ENCODE measurements at regions of chr17 and their contacts with region 1.

Region 1: DNA sequence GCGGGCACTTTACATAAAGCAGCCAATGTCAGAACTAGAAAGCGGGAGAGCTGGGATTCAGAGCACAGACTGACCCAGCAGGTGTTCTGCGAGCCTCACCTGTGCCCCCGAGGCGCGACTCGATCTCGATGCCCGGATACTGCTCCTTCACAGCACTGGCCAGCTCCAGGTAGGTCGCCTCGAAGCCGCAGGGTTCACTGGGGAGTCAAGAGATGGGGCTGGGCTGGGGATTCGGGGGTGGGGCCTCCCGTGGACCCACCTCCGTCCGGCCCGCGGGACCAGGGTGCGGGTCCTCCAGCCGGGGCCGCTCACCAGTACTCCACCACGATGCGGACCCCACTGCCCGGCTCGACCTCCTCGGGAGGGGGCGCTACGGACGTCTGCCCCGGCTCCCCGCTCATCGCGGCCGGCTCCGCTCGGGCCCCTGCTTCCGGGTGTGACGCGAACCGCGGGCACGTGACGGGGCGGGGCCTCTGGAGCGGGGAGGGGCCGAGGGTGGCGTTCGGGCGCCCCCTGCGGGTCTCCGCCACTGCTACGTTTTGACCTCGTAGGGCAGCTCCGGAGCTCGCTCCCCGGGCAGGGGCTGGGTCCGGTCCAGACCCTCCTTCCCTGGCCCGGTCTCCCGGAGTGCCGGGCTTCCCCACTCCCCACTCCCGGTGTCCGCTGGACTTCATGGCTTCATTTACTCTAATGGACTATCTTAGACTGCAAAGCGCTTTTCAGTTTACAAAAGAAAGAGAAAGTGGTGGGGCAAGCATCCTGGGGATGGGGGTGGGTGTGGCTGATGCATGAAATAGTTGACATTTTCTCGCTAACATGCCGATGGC is at the start of gene MIEN1:
- DNase-seq: peak; percentile 99
- H3K4me3 ChIP-seq: peak within 1 kb of the TSS; percentile 65 to 96
- H3K27ac ChIP-seq: peak within 1 kb of the TSS; percentile 65 to 76; a peak in 3 of 4 replicates
- H3K4me1 ChIP-seq: peaks cover 0 to 8% of the 10 kb centered on the region in 2 experiments; a peak in 1 of 4 replicates
- H3K27me3 ChIP-seq: no peaks in the 10 kb centered on the region
- CTCF ChIP-seq: peak; percentile 76
- EP300 ChIP-seq: no peak
- RAD21 ChIP-seq: peak; percentile 43
- polyA plus RNA-seq, gene MIEN1: 100 and 105 TPM in 2 replicates

Region 2: GRCh38 chr17:39538866-39539265 is 191.4 kb before region 1 on chr17:
- CTCF ChIA-PET with region 1: no interaction called
- POLR2A ChIA-PET with region 1: no interaction called
- DNase-seq: no peak
- H3K4me3 ChIP-seq: no peak overlapping the region
- H3K27ac ChIP-seq: no peak overlapping the region
- H3K4me1 ChIP-seq: no peaks in the 10 kb centered on the region
- H3K27me3 ChIP-seq: no peaks in the 10 kb centered on the region
- CTCF ChIP-seq: no peak
- EP300 ChIP-seq: no peak
- RAD21 ChIP-seq: no peak

Region 3: GRCh38 chr17:39668199-39668966 is 61.9 kb before region 1 on chr17 and contains the start of gene PNMT:
- CTCF ChIA-PET with region 1: interaction called, 10 read pairs
- POLR2A ChIA-PET with region 1: no interaction called
- DNase-seq: peak; percentile 93
- H3K4me3 ChIP-seq: peak within 1 kb of the TSS; percentile 36 to 49
- H3K27ac ChIP-seq: no peak within 1 kb of the TSS
- H3K4me1 ChIP-seq: peaks cover 0 to 12% of the 10 kb centered on the region in 2 experiments; a peak in 1 of 4 replicates
- H3K27me3 ChIP-seq: no peaks in the 10 kb centered on the region
- CTCF ChIP-seq: peak; percentile 61
- EP300 ChIP-seq: no peak
- RAD21 ChIP-seq: peak; percentile 28; the same call in 1 of the 2 replicates
- polyA plus RNA-seq, gene PNMT: 0.05 and 0.07 TPM in 2 replicates

Region 4: DNA sequence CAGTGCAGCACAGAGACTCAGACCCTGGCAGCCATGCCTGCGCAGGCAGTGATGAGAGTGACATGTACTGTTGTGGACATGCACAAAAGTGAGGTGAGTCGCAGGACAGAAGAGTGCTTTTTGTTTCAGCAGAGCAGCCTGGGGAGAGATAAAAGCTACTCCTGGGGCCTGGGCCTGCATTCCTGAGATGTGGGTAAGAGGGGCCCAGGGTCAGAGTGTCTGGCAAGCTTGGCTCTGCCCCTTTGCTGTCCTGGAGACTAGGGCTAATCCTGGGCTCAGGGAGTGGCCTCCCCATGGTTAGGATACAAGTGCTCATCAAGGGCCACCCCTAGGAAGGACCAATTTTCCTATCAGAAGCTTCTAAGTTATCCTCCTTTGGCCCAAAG is 35.2 kb before region 1 on chr17:
- CTCF ChIA-PET with region 1: interaction called, 15 read pairs
- POLR2A ChIA-PET with region 1: no interaction called
- DNase-seq: no peak
- H3K4me3 ChIP-seq: no peak overlapping the region
- H3K27ac ChIP-seq: no peak overlapping the region
- H3K4me1 ChIP-seq: no peaks in the 10 kb centered on the region
- H3K27me3 ChIP-seq: no peaks in the 10 kb centered on the region
- CTCF ChIP-seq: no peak
- EP300 ChIP-seq: no peak
- RAD21 ChIP-seq: no peak

Region 5: DNA sequence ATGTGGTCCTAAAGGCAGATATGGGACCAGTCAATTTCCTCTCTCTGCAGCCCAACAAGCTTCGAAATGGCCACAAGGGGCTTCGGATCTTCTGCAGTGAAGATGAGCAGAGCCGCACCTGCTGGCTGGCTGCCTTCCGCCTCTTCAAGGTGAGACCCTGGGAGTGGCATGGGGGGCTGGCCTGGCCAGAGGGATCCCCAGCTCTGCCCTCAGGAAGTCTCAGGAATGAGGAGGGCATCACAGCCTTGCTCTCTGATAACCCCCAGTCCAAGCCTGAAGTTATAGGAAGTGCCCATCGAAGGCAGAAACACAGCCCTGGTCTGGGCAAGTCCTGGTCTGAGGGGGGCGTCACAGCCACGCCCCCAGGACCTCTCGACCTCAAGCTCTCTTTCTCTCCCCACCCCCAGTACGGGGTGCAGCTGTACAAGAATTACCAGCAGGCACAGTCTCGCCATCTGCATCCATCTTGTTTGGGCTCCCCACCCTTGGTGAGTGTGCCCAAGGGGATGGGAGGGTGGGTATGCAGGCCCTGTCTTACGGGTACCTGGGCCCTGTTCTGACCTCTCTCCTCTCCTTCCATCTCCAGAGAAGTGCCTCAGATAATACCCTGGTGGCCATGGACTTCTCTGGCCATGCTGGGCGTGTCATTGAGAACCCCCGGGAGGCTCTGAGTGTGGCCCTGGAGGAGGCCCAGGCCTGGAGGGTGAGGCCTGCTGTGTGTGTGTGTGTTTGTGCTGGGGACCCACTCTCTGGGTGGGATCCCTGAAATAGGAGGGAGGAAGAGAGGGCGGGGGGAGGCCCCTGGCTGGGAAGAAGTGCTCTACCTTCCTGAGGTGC is 14.7 kb after region 1 on chr17:
- CTCF ChIA-PET with region 1: interaction called, 23 read pairs
- POLR2A ChIA-PET with region 1: no interaction called
- DNase-seq: no peak
- H3K4me3 ChIP-seq: no peak overlapping the region
- H3K27ac ChIP-seq: no peak overlapping the region
- H3K4me1 ChIP-seq: peaks cover 0 to 2% of the 10 kb centered on the region in 2 experiments; a peak in 1 of 4 replicates
- H3K27me3 ChIP-seq: 0 out of 2 replicates have a peak, but pooled peaks cover 7% of the 10 kb centered on the region
- CTCF ChIP-seq: 0 out of 2 replicates have a peak, but pooled peaks have one; percentile 8
- EP300 ChIP-seq: no peak
- RAD21 ChIP-seq: no peak

Region 6: GRCh38 chr17:39754161-39754951 is 24.0 kb after region 1 on chr17:
- CTCF ChIA-PET with region 1: interaction called, 22 read pairs
- POLR2A ChIA-PET with region 1: no interaction called
- DNase-seq: peak; percentile 98
- H3K4me3 ChIP-seq: peak overlapping the region; percentile 60 to 62
- H3K27ac ChIP-seq: peak overlapping the region in 1 of 2 experiments; percentile 72; a peak in 2 of 4 replicates
- H3K4me1 ChIP-seq: peaks cover 0 to 12% of the 10 kb centered on the region in 2 experiments; a peak in 1 of 4 replicates
- H3K27me3 ChIP-seq: peaks cover 23% of the 10 kb centered on the region; the same call in 1 of the 2 replicates
- CTCF ChIP-seq: peak; percentile 65
- EP300 ChIP-seq: no peak; a peak in 1 of 4 replicates
- RAD21 ChIP-seq: peak; percentile 72

Region 7: DNA sequence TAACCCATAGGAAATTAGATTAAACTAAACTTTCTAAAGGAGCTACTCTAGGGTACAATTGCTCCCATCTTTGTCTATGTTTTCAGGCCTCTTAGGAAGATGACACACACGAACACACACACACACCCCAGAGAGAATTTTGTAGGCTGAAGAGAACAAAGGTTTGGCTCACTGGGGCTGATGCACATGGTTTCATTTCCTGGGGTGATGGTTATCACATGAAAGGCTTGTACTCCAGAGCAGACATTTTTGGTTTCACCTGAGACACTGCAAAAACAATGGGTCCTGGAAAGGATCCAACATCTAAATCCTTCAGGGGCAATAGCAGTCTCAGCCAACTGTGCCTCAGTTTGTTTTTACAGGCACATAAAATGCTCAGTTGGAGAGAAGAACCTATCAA is 70.2 kb after region 1 on chr17:
- CTCF ChIA-PET with region 1: no interaction called
- POLR2A ChIA-PET with region 1: no interaction called
- DNase-seq: no peak
- H3K4me3 ChIP-seq: no peak overlapping the region
- H3K27ac ChIP-seq: no peak overlapping the region
- H3K4me1 ChIP-seq: no peaks in the 10 kb centered on the region; a peak in 1 of 4 replicates
- H3K27me3 ChIP-seq: peaks cover 42% of the 10 kb centered on the region; the same call in 1 of the 2 replicates
- CTCF ChIP-seq: no peak
- EP300 ChIP-seq: no peak
- RAD21 ChIP-seq: no peak